Activated CD4-positive, alpha-beta memory T cell treated with anti-CD3 and anti-CD28 coated beads for 36 hours (primary cell): ENCODE measurements at regions of chr4 and their contacts with region 1.

Region 1: DNA sequence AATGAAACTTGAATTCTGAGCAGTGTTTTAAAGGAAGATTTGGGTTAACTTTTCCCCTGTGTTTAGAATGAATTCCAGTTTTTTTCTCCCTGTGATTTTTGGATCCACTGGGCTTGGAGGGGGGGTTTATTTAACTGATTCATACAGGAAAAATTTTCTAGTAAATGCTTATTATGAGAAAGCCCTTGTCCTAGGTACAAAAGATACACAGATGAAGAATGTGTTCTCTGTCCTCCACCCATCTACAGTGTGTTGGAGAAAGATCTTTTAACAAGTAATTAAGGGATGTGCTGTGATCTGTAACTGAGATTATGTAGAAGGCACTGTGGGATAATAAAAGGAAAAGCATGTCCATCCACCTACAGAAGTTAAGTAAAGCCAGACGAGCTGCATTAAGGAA is 103.9 kb downstream of the STIM2 start:
- DNase-seq: no peak
- H3K4me3 Mint-ChIP-seq: no peak overlapping the region
- H3K27ac Mint-ChIP-seq: no peak overlapping the region
- H3K4me1 Mint-ChIP-seq: peaks cover 49% of the 10 kb centered on the region
- H3K27me3 Mint-ChIP-seq: no peaks in the 10 kb centered on the region

Region 2: GRCh38 chr4:26878794-26879391 is 85.6 kb before region 1 on chr4:
- CTCF ChIA-PET with region 1: no interaction called
- POLR2A ChIA-PET with region 1: no interaction called
- intact Hi-C with region 1: loop called (anchors 1 kb)
- DNase-seq: peak; percentile 47
- H3K4me3 Mint-ChIP-seq: peak overlapping the region; percentile 60
- H3K27ac Mint-ChIP-seq: peak overlapping the region; percentile 99
- H3K4me1 Mint-ChIP-seq: peaks cover 73% of the 10 kb centered on the region
- H3K27me3 Mint-ChIP-seq: no peaks in the 10 kb centered on the region

Region 3: DNA sequence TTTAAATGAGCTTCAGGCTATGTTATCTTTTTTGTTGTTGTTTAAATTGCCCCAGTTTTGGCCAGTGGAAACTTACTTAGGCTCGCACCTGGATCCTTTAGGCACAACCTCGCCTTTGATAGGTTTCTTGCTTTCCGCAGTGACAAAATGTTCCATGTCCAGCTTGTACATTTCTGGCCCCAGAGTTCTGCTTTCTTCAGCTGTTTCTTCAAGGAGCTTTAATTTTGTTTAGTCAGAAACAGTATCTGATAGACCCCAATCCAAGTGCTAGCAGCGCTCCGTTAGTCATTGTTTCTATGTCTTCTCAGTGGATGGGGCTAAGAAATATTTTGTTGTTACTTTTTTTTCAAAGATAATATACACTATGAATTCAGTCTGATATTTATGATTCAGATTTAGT is 21.1 kb before region 1 on chr4:
- CTCF ChIA-PET with region 1: no interaction called
- POLR2A ChIA-PET with region 1: no interaction called
- intact Hi-C with region 1: loop called (anchors 2 kb)
- DNase-seq: no peak
- H3K4me3 Mint-ChIP-seq: no peak overlapping the region
- H3K27ac Mint-ChIP-seq: no peak overlapping the region
- H3K4me1 Mint-ChIP-seq: peaks cover 40% of the 10 kb centered on the region
- H3K27me3 Mint-ChIP-seq: no peaks in the 10 kb centered on the region

Region 4: GRCh38 chr4:26992657-26993361 is 28.3 kb after region 1 on chr4:
- CTCF ChIA-PET with region 1: no interaction called
- POLR2A ChIA-PET with region 1: no interaction called
- intact Hi-C with region 1: loop called (anchors 2 kb)
- DNase-seq: peak; percentile 46
- H3K4me3 Mint-ChIP-seq: no peak overlapping the region
- H3K27ac Mint-ChIP-seq: no peak overlapping the region
- H3K4me1 Mint-ChIP-seq: peaks cover 25% of the 10 kb centered on the region
- H3K27me3 Mint-ChIP-seq: no peaks in the 10 kb centered on the region

Region 5: DNA sequence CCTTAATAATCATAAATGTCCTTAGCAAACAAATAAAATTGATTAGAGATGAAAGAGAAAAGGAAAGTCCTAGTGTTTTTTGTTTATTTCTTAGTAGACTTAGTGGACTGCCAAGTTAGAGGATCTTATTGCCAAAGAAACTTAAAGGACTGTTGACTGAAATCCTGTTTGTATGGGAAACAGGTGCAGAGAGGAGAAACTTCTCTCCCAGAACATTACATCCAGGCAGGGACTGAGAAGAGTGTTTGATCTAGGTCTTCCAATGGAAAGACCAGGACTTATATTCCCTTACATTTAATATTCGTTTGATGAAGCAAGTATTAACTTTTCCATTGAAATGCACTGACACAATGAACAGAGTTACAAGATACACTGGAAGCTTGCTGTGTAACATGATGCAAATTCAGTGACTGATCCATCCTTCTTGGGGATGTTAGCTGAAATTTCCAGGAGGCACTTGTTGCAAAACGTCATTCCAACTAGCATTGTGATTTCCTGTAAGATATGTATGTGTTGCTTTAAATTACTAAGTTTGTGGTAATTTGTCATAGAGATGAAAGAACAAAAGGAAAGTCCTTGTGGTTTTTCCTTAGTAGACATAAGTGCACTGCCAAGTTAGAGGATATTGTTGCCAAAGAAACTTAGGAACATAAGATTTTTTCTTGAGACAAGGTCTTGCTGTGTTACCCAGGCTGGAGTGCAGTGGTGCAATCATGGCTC is 401.8 kb after region 1 on chr4:
- CTCF ChIA-PET with region 1: no interaction called
- POLR2A ChIA-PET with region 1: no interaction called
- intact Hi-C with region 1: no loop called
- DNase-seq: no peak
- H3K4me3 Mint-ChIP-seq: no peak overlapping the region
- H3K27ac Mint-ChIP-seq: no peak overlapping the region
- H3K4me1 Mint-ChIP-seq: no peaks in the 10 kb centered on the region
- H3K27me3 Mint-ChIP-seq: no peaks in the 10 kb centered on the region

Region 6: DNA sequence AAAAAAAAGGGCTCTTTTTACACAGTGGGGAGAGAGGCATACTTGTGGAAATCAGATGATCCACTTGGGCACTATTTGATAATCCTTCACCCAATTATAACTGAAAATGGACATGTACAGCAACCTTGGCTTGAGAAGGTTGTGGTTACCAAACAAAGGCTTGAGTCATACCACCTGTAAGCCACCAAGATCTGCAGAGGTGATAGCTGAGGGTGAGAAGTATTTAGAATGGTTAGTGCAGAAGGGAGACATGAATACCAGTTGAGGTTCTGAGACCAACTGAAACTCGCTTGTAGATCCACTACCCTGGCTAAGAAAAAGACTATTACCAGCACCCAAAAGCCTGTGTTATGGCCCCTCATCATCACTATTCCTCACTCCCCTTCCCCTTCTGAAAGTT is 510.2 kb after region 1 on chr4:
- CTCF ChIA-PET with region 1: no interaction called
- POLR2A ChIA-PET with region 1: no interaction called
- intact Hi-C with region 1: no loop called
- DNase-seq: no peak
- H3K4me3 Mint-ChIP-seq: no peak overlapping the region
- H3K27ac Mint-ChIP-seq: no peak overlapping the region
- H3K4me1 Mint-ChIP-seq: no peaks in the 10 kb centered on the region
- H3K27me3 Mint-ChIP-seq: no peaks in the 10 kb centered on the region